ENCODE measurements at regions of chr3 and their contacts with region 1.

Region 1: GRCh38 chr3:123028233-123028828 is 768 bp upstream of the SEMA5B start:
- DNase-seq: peak; percentile 80
- ATAC-seq: peak; percentile 52
- H3K4me3 ChIP-seq: peak overlapping the region; percentile 75
- H3K27ac ChIP-seq: no peak overlapping the region
- H3K4me1 ChIP-seq: peaks cover 17% of the 10 kb centered on the region
- H3K27me3 ChIP-seq: peaks cover 88% of the 10 kb centered on the region
- CTCF ChIP-seq: peak; percentile 78

Region 2: DNA sequence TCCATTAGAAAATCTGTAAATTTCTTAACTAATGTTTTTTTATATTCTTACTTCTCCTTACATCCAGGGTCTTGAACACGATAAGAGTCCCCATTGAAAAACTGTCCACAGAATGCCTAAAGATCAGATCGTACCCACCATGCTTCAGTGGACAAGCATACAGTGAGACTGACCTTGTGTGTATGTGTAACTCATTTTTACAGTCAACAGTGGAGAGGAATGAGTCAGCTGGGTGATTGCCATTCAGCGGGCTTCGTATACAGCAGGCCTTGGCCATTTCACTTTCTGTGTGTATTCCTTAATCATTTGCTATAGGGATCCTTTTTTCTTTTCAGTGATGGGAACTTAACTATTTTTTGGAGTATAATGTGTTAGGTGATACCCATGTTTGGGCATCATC is 337.1 kb before region 1 on chr3:
- CTCF ChIA-PET with region 1: no interaction called
- POLR2A ChIA-PET with region 1: no interaction called
- intact Hi-C with region 1: loop called (anchors 10 kb)
- DNase-seq: peak; percentile 92
- ATAC-seq: peak; percentile 99
- H3K4me3 ChIP-seq: no peak overlapping the region
- H3K27ac ChIP-seq: no peak overlapping the region
- H3K4me1 ChIP-seq: peaks cover 9% of the 10 kb centered on the region
- H3K27me3 ChIP-seq: no peaks in the 10 kb centered on the region
- CTCF ChIP-seq: no peak

Region 3: DNA sequence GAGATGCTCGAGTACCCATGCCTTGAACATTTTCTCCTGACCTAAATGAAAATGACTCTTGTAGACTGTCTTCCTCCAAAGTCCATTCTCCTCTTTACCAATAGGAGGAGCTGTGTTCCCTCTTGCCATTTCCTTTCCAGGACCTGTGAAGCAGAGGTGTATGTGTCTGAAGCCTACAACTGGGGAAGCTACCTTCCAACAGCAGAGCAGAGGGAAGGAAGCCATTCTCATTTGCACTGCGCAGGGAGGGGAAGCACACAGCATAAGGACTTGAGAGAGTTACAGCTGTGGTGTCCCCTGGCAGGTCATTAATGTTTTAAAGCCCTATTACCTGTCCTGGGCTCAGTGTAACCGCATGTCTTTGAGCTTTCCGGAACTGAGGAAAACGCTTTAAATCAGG is 273.4 kb before region 1 on chr3:
- CTCF ChIA-PET with region 1: interaction called, 4 read pairs
- POLR2A ChIA-PET with region 1: no interaction called
- intact Hi-C with region 1: loop called (anchors 1 kb)
- DNase-seq: peak; percentile 85
- ATAC-seq: peak; percentile 96
- H3K4me3 ChIP-seq: no peak overlapping the region
- H3K27ac ChIP-seq: no peak overlapping the region
- H3K4me1 ChIP-seq: no peaks in the 10 kb centered on the region
- H3K27me3 ChIP-seq: no peaks in the 10 kb centered on the region
- CTCF ChIP-seq: peak; percentile 97

Region 4: GRCh38 chr3:122858373-122858772 is 170.0 kb before region 1 on chr3:
- CTCF ChIA-PET with region 1: no interaction called
- POLR2A ChIA-PET with region 1: no interaction called
- intact Hi-C with region 1: loop called (anchors 1 kb)
- DNase-seq: peak; percentile 58
- ATAC-seq: no peak
- H3K4me3 ChIP-seq: no peak overlapping the region
- H3K27ac ChIP-seq: no peak overlapping the region
- H3K4me1 ChIP-seq: no peaks in the 10 kb centered on the region
- H3K27me3 ChIP-seq: no peaks in the 10 kb centered on the region
- CTCF ChIP-seq: peak; percentile 78

Region 5: GRCh38 chr3:122942937-122943827 is 85.1 kb before region 1 on chr3:
- CTCF ChIA-PET with region 1: interaction called, 3 read pairs
- POLR2A ChIA-PET with region 1: no interaction called
- intact Hi-C with region 1: loop called (anchors 1 kb)
- DNase-seq: peak; percentile 84
- ATAC-seq: peak; percentile 89
- H3K4me3 ChIP-seq: no peak overlapping the region
- H3K27ac ChIP-seq: no peak overlapping the region
- H3K4me1 ChIP-seq: peaks cover 19% of the 10 kb centered on the region
- H3K27me3 ChIP-seq: no peaks in the 10 kb centered on the region
- CTCF ChIP-seq: peak; percentile 98

Region 6: DNA sequence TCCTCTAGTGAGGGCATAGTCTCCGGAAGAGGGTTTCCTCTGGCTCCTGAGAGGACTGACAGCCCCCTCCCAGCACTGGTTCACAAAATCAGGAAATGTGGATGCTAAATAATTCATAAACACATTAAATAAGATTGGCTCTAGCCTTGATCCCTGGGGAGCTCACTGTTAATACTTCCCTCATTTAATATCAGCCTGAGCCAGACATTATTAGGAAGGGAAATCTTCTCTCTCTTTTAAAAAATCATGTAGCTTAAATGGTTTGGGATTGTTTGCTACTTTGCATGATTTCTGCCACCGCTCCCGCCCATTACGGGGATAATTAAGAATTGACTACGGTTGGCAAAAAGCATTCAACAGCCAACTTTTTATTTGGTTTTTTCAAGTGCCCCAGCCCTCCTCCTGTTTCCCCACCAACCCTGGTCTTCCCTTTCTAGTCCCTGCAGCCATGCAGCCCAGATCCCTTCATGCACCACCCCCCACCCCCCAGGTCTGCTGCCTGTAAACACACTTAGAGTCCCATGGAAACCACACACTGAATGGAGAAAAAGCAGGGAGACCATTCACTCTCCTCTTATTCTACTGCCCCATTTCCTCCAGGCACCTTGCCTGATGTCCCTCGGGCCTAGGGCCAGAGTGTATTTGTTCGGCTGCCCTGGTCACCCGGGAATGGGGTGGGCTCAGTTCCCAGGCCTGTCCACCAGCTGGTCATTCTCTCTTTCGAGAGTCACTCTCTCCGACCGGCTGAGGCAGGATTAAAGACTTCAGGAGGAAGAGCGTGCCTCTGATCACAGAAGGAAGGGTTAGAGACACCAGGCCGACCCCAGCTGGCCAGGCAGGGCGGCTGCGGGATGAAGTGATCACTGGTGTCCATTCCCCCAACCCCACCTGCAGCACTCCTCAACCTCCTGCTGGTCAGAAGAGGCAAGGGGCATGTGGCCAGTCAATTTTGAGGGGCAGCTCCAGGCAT is 45.8 kb before region 1 on chr3:
- CTCF ChIA-PET with region 1: no interaction called
- POLR2A ChIA-PET with region 1: no interaction called
- intact Hi-C with region 1: no loop called
- DNase-seq: no peak
- ATAC-seq: peak; percentile 27; the same call in 1 of the 2 replicates
- H3K4me3 ChIP-seq: no peak overlapping the region
- H3K27ac ChIP-seq: no peak overlapping the region
- H3K4me1 ChIP-seq: peaks cover 8% of the 10 kb centered on the region; the same call in 1 of the 2 replicates
- H3K27me3 ChIP-seq: peaks cover 76% of the 10 kb centered on the region
- CTCF ChIP-seq: no peak; the same call in 1 of the 2 replicates

Region 7: DNA sequence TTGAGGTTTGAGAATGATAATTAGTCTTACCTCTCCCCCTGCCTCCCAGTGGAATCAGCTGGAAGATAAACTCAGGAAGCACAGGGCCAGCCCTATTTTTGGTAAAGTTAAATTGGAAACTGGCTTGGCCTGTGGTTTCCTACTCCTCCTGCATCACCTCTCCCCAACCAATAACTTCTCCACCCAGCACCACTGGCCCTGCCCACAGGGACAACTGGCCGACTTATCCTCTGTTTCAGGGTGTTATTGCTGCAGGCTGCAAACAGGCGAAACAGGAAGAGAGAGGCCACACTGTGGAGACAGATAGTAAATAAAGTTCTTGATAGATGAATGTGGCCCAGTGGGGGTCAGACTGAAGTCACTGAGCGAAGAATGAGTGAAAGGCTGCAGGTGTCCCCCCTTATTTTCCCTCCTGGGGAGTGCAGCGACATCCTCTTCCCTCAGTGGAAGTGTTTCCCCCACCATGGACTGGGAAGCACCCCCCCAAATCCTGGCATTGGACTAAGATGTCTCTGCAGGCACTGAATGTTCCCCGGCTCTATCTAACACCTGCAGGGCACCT is 85.6 kb after region 1 on chr3:
- CTCF ChIA-PET with region 1: no interaction called
- POLR2A ChIA-PET with region 1: no interaction called
- intact Hi-C with region 1: no loop called
- DNase-seq: no peak
- ATAC-seq: no peak
- H3K4me3 ChIP-seq: no peak overlapping the region
- H3K27ac ChIP-seq: no peak overlapping the region
- H3K4me1 ChIP-seq: no peaks in the 10 kb centered on the region
- H3K27me3 ChIP-seq: no peaks in the 10 kb centered on the region
- CTCF ChIP-seq: no peak

Measured in PC-3 (cell line).